ENCODE measurements at regions of chr6 and their contacts with region 1.

Region 1: DNA sequence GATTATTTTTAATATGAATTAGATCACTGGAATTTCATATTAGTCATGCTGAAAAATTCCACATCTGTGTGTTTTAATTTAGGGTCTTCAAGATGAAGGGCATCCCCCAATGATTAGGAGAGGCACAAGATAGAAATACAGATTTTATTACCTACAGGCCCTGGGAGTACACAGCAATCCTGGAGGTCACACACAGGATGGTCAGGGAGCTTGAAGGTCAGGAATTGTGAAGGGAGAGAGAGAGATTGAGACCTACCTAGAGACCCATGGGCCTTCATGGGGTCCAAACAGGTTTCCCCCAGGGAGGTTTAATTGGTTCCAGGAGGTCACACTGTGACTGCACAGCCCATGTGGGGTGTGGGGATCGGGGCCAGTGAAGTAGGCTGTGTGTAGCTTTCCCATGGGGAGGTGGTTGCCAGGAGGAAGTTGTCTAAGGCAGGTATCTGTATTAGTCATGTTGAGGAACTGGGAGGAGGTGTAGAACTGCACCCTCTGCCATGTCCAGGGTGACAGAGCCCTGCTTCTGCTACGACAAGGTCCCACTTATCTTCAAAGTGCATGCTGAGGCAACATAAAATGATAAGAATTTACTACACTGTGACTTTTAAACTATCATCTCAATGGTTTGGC is 18.3 kb downstream of the SNX9 start:
- DNase-seq: no peak
- H3K4me3 ChIP-seq: no peak overlapping the region
- H3K27ac ChIP-seq: no peak overlapping the region
- H3K4me1 ChIP-seq: peaks cover 28% of the 10 kb centered on the region
- H3K27me3 ChIP-seq: no peaks in the 10 kb centered on the region
- CTCF ChIP-seq: no peak
- POLR2A ChIP-seq: no peak

Region 2: DNA sequence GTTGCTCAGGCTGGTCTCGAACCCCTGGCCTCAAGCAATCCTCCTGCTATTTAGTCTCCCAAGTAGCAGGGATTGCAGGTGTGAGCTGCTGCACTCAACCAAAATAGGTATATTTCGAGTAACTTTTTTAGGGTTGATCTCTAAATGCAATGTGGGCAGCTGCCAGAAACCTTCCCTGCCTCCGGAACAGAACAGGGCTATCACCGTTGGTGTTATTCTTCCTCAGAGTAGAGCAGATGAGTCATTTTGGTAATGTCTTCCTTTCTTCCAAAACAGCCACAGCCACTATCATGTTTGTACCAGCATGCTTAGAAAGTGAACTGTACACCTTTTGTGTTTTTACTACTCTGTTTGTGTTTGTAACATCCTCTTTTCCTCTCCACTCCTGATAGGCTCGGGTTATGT is 25.8 kb after region 1 on chr6:
- CTCF ChIA-PET with region 1: interaction called, 4 read pairs
- POLR2A ChIA-PET with region 1: interaction called, 12 read pairs
- dilution Hi-C with region 1: no loop called
- intact Hi-C with region 1: no loop called
- DNase-seq: peak; percentile 81
- H3K4me3 ChIP-seq: no peak overlapping the region
- H3K27ac ChIP-seq: peak overlapping the region; percentile 28
- H3K4me1 ChIP-seq: peaks cover 35% of the 10 kb centered on the region
- H3K27me3 ChIP-seq: no peaks in the 10 kb centered on the region
- CTCF ChIP-seq: no peak
- POLR2A ChIP-seq: no peak

Measured in endothelial cell of umbilical vein (primary cell).